Endothelial cell of umbilical vein (primary cell): ENCODE measurements at regions of chr10 and their contacts with region 1.

Region 1: DNA sequence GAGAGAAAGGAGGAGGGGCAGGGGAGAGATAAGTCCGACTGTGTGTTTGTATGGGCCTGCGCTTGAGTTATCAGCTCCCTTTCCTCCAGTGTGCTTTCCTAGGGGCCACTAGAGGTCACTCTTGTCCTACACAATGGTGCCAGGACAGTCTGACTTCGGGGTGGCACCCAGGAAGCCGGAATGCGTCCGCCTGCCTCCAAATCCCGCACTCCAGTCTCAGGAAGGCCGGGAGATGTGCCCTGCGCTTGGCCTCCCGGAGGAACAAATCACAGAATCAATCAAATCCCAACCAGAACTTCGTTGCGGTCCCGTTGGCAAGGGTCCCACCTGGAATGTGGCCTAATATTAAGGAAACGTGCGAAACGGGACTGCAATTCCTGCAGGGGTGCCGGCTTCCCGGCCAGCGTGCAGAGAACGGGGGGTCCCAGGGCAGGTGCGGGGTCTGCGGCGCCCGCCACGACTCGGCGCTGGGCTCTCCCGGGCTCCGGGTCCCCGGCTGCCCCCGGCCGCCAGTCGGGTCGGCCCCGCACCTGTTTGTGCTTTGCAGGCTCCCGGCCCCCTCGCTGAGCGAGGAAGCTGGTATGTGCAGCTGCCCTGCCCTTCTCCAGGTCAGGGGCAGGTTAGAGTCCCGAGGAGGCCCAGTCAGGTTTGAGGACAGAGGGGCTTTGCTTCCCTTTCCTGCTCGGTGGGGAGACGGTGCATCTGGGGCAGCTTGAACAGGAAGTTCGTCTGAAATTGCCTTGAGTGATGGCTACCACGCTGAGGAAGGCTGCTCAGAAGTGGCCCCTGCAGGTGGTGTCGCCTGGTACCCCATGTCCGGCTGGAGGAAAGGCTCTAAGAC is 21.0 kb upstream of the HPS1 start:
- DNase-seq: peak; percentile 56
- H3K4me3 ChIP-seq: peak overlapping the region in 2 of 3 experiments; percentile 27 to 45
- H3K27ac ChIP-seq: no peak overlapping the region
- H3K4me1 ChIP-seq: peaks cover 3% of the 10 kb centered on the region
- H3K27me3 ChIP-seq: no peaks in the 10 kb centered on the region
- CTCF ChIP-seq: peak; percentile 71 to 80
- POLR2A ChIP-seq: no peak

Region 2: GRCh38 chr10:97792141-97792721 is 675.5 kb before region 1 on chr10:
- CTCF ChIA-PET with region 1: no interaction called
- POLR2A ChIA-PET with region 1: no interaction called
- dilution Hi-C with region 1: no loop called
- intact Hi-C with region 1: no loop called
- DNase-seq: peak; percentile 43
- H3K4me3 ChIP-seq: no peak overlapping the region
- H3K27ac ChIP-seq: no peak overlapping the region
- H3K4me1 ChIP-seq: no peaks in the 10 kb centered on the region
- H3K27me3 ChIP-seq: peaks cover 3 to 6% of the 10 kb centered on the region in 2 experiments
- CTCF ChIP-seq: peak; percentile 76 to 93
- POLR2A ChIP-seq: no peak

Region 3: DNA sequence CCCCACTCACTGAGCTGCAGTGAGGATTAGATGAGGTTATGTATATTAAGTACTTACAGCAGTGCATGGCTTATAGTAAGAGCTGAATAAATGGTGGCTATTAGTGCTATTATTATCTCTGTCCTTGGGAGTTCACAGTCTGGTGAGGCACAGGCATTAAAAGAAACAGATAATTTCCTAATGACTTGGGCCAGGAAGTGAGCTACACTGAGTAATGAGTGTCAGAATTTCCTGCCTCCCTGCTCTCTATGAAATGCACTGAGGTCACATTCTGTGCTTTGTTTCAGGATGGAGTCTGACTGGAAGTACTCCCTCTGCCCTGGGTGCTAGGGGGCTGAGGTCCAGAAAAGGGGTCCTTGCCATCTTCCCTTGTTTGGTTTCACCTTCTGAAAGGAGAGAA is 151.1 kb before region 1 on chr10:
- CTCF ChIA-PET with region 1: interaction called, 5 read pairs
- POLR2A ChIA-PET with region 1: no interaction called
- dilution Hi-C with region 1: no loop called
- intact Hi-C with region 1: loop called (anchors 5 kb)
- DNase-seq: peak; percentile 82
- H3K4me3 ChIP-seq: peak overlapping the region in 1 of 3 experiments; percentile 3
- H3K27ac ChIP-seq: no peak overlapping the region
- H3K4me1 ChIP-seq: peaks cover 16% of the 10 kb centered on the region
- H3K27me3 ChIP-seq: peaks cover 0 to 10% of the 10 kb centered on the region in 2 experiments
- CTCF ChIP-seq: no peak
- POLR2A ChIP-seq: no peak

Region 4: GRCh38 chr10:98555021-98555619 is 87.4 kb after region 1 on chr10:
- CTCF ChIA-PET with region 1: interaction called, 18 read pairs
- POLR2A ChIA-PET with region 1: no interaction called
- dilution Hi-C with region 1: no loop called
- intact Hi-C with region 1: no loop called
- DNase-seq: peak; percentile 41
- H3K4me3 ChIP-seq: no peak overlapping the region
- H3K27ac ChIP-seq: no peak overlapping the region
- H3K4me1 ChIP-seq: peaks cover 9% of the 10 kb centered on the region
- H3K27me3 ChIP-seq: no peaks in the 10 kb centered on the region
- CTCF ChIP-seq: no peak
- POLR2A ChIP-seq: no peak

Region 5: GRCh38 chr10:99042051-99042771 is 574.5 kb after region 1 on chr10:
- CTCF ChIA-PET with region 1: interaction called, 9 read pairs
- POLR2A ChIA-PET with region 1: no interaction called
- dilution Hi-C with region 1: no loop called
- intact Hi-C with region 1: loop called (anchors 2 kb)
- DNase-seq: no peak
- H3K4me3 ChIP-seq: no peak overlapping the region
- H3K27ac ChIP-seq: no peak overlapping the region
- H3K4me1 ChIP-seq: no peaks in the 10 kb centered on the region
- H3K27me3 ChIP-seq: no peaks in the 10 kb centered on the region
- CTCF ChIP-seq: no peak
- POLR2A ChIP-seq: no peak

Region 6: GRCh38 chr10:99276848-99277486 is 809.2 kb after region 1 on chr10:
- CTCF ChIA-PET with region 1: interaction called, 38 read pairs
- POLR2A ChIA-PET with region 1: no interaction called
- dilution Hi-C with region 1: no loop called
- intact Hi-C with region 1: loop called (anchors 1 kb)
- DNase-seq: peak; percentile 30
- H3K4me3 ChIP-seq: no peak overlapping the region
- H3K27ac ChIP-seq: no peak overlapping the region
- H3K4me1 ChIP-seq: no peaks in the 10 kb centered on the region
- H3K27me3 ChIP-seq: no peaks in the 10 kb centered on the region
- CTCF ChIP-seq: peak; percentile 18 to 19
- POLR2A ChIP-seq: no peak

Region 7: GRCh38 chr10:99430451-99431189 is 962.9 kb after region 1 on chr10 and contains the start of gene GOT1:
- CTCF ChIA-PET with region 1: interaction called, 19 read pairs
- POLR2A ChIA-PET with region 1: no interaction called
- dilution Hi-C with region 1: no loop called
- intact Hi-C with region 1: loop called (anchors 2 kb)
- DNase-seq: peak; percentile 99
- H3K4me3 ChIP-seq: peak within 1 kb of the TSS; percentile 53 to 87 (median 74)
- H3K27ac ChIP-seq: peak within 1 kb of the TSS; percentile 42
- H3K4me1 ChIP-seq: peaks cover 14% of the 10 kb centered on the region
- H3K27me3 ChIP-seq: no peaks in the 10 kb centered on the region
- CTCF ChIP-seq: no peak
- POLR2A ChIP-seq: peak; percentile 68
- total RNA-seq, gene GOT1: 36.3 and 40.7 TPM in 2 replicates